SK-N-SH (cell line): ENCODE measurements at regions of chr19 and their contacts with region 1.

Region 1: DNA sequence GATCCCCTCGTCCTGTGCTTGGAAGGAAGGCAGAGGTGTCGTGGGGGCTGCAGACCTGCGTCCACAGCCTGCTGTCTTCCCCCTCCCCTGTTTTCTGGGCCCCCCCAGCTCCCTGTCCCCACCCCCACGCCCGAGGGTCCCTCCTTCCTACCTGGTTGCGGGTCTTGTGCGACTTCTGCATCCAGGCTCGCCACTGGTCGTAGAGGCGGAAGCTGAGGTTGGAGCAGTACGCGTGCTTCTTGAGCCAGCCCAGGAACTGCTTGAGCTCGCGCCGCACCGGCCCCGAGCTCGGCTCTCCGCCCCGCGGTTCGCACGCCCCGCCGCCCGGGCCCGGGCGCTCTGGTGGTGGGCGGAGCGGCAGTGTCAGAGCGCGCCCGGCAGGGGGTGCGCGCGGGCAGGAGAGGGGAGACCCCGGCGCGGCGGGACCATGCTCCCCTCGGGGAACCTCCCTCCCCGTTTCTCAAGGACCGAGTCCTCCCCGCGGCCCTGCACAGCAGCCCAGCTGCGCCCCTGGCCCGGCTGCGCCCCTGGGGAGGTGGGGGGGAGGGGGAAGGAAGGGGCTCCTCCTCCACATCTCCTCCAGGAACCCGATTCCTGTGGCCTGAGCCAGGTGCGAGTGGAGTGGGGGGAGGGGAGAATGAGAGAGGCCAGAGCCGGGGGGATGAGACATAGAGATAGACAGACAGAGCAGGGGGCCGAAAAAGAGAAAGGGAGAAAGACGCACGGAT is 5.7 kb downstream of the REX1BD start:
- DNase-seq: peak; percentile 96
- H3K4me3 ChIP-seq: peak overlapping the region; percentile 32 to 46; a peak in 3 of 4 replicates
- H3K27ac ChIP-seq: no peak overlapping the region
- H3K4me1 ChIP-seq: peaks cover 6 to 36% of the 10 kb centered on the region in 2 experiments; a peak in 2 of 4 replicates
- H3K27me3 ChIP-seq: no peaks in the 10 kb centered on the region
- CTCF ChIP-seq: peak; percentile 75
- EP300 ChIP-seq: no peak
- RAD21 ChIP-seq: peak; percentile 75

Region 2: GRCh38 chr19:18500799-18501198 is 93.5 kb before region 1 on chr19:
- CTCF ChIA-PET with region 1: no interaction called
- POLR2A ChIA-PET with region 1: no interaction called
- DNase-seq: no peak
- H3K4me3 ChIP-seq: no peak overlapping the region
- H3K27ac ChIP-seq: no peak overlapping the region
- H3K4me1 ChIP-seq: peaks cover 10 to 58% of the 10 kb centered on the region in 2 experiments; a peak in 2 of 4 replicates
- H3K27me3 ChIP-seq: no peaks in the 10 kb centered on the region
- CTCF ChIP-seq: no peak
- EP300 ChIP-seq: no peak
- RAD21 ChIP-seq: no peak

Region 3: DNA sequence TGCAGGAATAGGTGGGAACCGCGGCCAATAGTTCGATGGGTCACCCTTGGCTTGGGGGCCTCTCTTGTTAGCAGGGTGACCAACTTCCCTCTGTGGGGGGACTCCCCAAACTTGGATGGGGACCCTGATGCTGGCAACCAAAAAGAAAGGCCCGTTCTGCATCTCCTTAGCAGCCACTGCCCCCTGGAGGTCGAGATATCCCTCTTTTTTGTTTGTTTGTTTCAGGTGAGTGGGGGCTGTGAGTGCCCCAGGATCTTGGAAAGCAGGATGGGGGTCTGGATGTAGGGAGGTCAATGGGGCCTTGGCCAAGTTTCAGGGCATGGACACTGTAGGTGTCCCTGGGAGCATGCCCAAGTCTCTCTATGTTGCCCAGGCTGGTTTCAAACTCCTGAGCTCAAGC is 81.5 kb after region 1 on chr19:
- CTCF ChIA-PET with region 1: interaction called, 14 read pairs
- POLR2A ChIA-PET with region 1: no interaction called
- DNase-seq: no peak
- H3K4me3 ChIP-seq: no peak overlapping the region
- H3K27ac ChIP-seq: no peak overlapping the region
- H3K4me1 ChIP-seq: peaks cover 13 to 15% of the 10 kb centered on the region in 2 experiments; a peak in 2 of 4 replicates
- H3K27me3 ChIP-seq: no peaks in the 10 kb centered on the region
- CTCF ChIP-seq: peak; percentile 54
- EP300 ChIP-seq: no peak
- RAD21 ChIP-seq: peak; percentile 58

Region 4: GRCh38 chr19:18856385-18857126 is 262.3 kb after region 1 on chr19:
- CTCF ChIA-PET with region 1: interaction called, 234 read pairs
- POLR2A ChIA-PET with region 1: no interaction called
- DNase-seq: peak; percentile 63
- H3K4me3 ChIP-seq: no peak overlapping the region
- H3K27ac ChIP-seq: no peak overlapping the region; a peak in 1 of 4 replicates
- H3K4me1 ChIP-seq: peaks cover 0 to 3% of the 10 kb centered on the region in 2 experiments; a peak in 1 of 4 replicates
- H3K27me3 ChIP-seq: no peaks in the 10 kb centered on the region
- CTCF ChIP-seq: peak; percentile 47
- EP300 ChIP-seq: no peak
- RAD21 ChIP-seq: peak; percentile 68